H1 (cell line): ENCODE measurements at regions of chr10 and their contacts with region 1.

Region 1: DNA sequence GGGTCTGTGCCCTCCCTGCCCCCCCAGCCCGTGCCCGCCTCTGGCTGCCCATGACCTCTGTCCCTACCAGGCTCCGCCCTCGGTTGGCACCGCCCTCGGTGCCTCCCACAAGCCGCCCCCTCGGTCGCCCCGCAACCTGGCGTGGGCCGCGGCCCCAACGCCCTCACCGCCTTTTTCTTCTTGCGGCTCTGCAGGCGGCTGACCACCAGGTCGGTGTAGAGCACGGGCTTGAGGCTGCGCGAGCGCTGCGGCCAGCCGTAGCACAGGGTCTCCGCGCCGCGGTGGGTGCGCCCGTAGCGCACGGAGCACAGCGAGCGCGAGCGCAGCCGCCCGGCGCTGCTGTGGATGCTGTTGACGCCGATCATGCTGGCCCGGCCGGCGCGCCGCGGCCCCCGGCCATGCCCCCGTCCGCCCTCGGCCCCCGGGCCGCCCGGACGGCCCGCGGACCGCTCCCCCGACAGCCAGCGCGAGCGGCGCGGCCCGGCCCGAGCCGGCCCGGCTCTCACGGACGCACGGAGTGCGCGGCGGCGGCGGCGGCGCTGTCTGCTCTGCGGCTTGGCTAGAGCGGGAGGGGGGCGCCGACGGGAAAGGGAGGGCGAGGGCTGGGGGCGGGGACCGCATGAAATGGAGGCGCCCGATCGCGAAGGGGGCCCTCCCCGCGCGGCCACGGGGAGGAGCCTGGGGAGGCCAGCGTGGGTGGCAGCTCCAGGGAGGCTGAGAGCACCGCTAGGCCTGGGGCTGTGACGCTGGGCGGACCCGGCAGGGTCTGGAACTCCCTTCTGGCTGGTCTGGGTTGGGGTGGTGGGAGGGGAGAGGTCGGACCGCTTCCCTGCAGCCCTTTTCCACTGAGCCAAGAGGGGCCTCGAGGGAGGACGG is 9.6 kb downstream of the PSD start:
- DNase-seq: peak in 1 of 2 experiments; percentile 67
- H3K4me3 ChIP-seq: peak overlapping the region; percentile 55 to 70 (median 57)
- H3K27ac ChIP-seq: no peak overlapping the region
- H3K4me1 ChIP-seq: peaks cover 9 to 31% (median 22%) of the 10 kb centered on the region in 4 experiments
- H3K27me3 ChIP-seq: peaks cover 17 to 52% (median 50%) of the 10 kb centered on the region in 4 experiments
- CTCF ChIP-seq: peak in 1 of 3 experiments; percentile 6; a peak in 1 of 4 replicates
- EP300 ChIP-seq: no peak; a peak in 1 of 3 replicates
- POLR2A ChIP-seq: no peak
- RAD21 ChIP-seq: no peak; a peak in 1 of 4 replicates

Region 2: GRCh38 chr10:102001435-102002068 is 407.4 kb before region 1 on chr10:
- CTCF ChIA-PET with region 1: no interaction called
- POLR2A ChIA-PET with region 1: no interaction called
- DNase-seq: no peak
- H3K4me3 ChIP-seq: no peak overlapping the region
- H3K27ac ChIP-seq: no peak overlapping the region
- H3K4me1 ChIP-seq: no peaks in the 10 kb centered on the region
- H3K27me3 ChIP-seq: no peaks in the 10 kb centered on the region
- CTCF ChIP-seq: no peak
- EP300 ChIP-seq: no peak
- POLR2A ChIP-seq: no peak
- RAD21 ChIP-seq: no peak

Region 3: GRCh38 chr10:102262744-102263370 is 146.1 kb before region 1 on chr10:
- CTCF ChIA-PET with region 1: no interaction called
- POLR2A ChIA-PET with region 1: no interaction called
- DNase-seq: no peak
- H3K4me3 ChIP-seq: no peak overlapping the region
- H3K27ac ChIP-seq: no peak overlapping the region
- H3K4me1 ChIP-seq: no peaks in the 10 kb centered on the region
- H3K27me3 ChIP-seq: no peaks in the 10 kb centered on the region
- CTCF ChIP-seq: no peak
- EP300 ChIP-seq: no peak
- POLR2A ChIP-seq: no peak
- RAD21 ChIP-seq: no peak

Region 4: GRCh38 chr10:102394079-102394800 is 14.7 kb before region 1 on chr10:
- CTCF ChIA-PET with region 1: interaction called, 205 read pairs
- POLR2A ChIA-PET with region 1: interaction called, 33 read pairs
- DNase-seq: peak; percentile 65 to 96
- H3K4me3 ChIP-seq: peak overlapping the region; percentile 29 to 69 (median 55)
- H3K27ac ChIP-seq: peak overlapping the region; percentile 69; the same call in 1 of the 2 replicates
- H3K4me1 ChIP-seq: peaks cover 0 to 17% (median 9%) of the 10 kb centered on the region in 4 experiments; a peak in 6 of 7 replicates
- H3K27me3 ChIP-seq: peaks cover 0 to 22% (median 20%) of the 10 kb centered on the region in 4 experiments; a peak in 6 of 7 replicates
- CTCF ChIP-seq: peak in 1 of 3 experiments; percentile 96; a peak in 2 of 4 replicates
- EP300 ChIP-seq: peak in 1 of 2 experiments; percentile 89; a peak in 1 of 3 replicates
- POLR2A ChIP-seq: no peak; a peak in 1 of 3 replicates
- RAD21 ChIP-seq: peak; percentile 69 to 81

Region 5: GRCh38 chr10:102542800-102543418 is 133.9 kb after region 1 on chr10:
- CTCF ChIA-PET with region 1: no interaction called
- POLR2A ChIA-PET with region 1: no interaction called
- DNase-seq: no peak
- H3K4me3 ChIP-seq: no peak overlapping the region
- H3K27ac ChIP-seq: no peak overlapping the region
- H3K4me1 ChIP-seq: no peaks in the 10 kb centered on the region
- H3K27me3 ChIP-seq: no peaks in the 10 kb centered on the region
- CTCF ChIP-seq: no peak
- EP300 ChIP-seq: no peak
- POLR2A ChIP-seq: no peak
- RAD21 ChIP-seq: no peak

Region 6: GRCh38 chr10:102555781-102556328 is 146.9 kb after region 1 on chr10:
- CTCF ChIA-PET with region 1: no interaction called
- POLR2A ChIA-PET with region 1: no interaction called
- DNase-seq: no peak
- H3K4me3 ChIP-seq: no peak overlapping the region
- H3K27ac ChIP-seq: no peak overlapping the region
- H3K4me1 ChIP-seq: no peaks in the 10 kb centered on the region
- H3K27me3 ChIP-seq: no peaks in the 10 kb centered on the region; a peak in 1 of 7 replicates
- CTCF ChIP-seq: no peak
- EP300 ChIP-seq: no peak
- POLR2A ChIP-seq: no peak
- RAD21 ChIP-seq: no peak